MCF 10A (cell line): ENCODE measurements at regions of chr5 and their contacts with region 1.

Region 1: GRCh38 chr5:8908055-8908683 is 637.7 kb downstream of the SEMA5A start:
- DNase-seq: peak; percentile 62
- H3K4me3 Mint-ChIP-seq: no peak overlapping the region
- H3K27ac Mint-ChIP-seq: peak overlapping the region; percentile 94
- H3K4me1 Mint-ChIP-seq: peaks cover 37% of the 10 kb centered on the region
- H3K27me3 Mint-ChIP-seq: no peaks in the 10 kb centered on the region
- CTCF ChIP-seq: peak; percentile 65

Region 2: GRCh38 chr5:8756498-8757084 is 151.6 kb before region 1 on chr5:
- CTCF ChIA-PET with region 1: interaction called, 3 read pairs
- POLR2A ChIA-PET with region 1: interaction called, 3 read pairs
- intact Hi-C with region 1: loop called (anchors 1 kb)
- DNase-seq: peak; percentile 55
- H3K4me3 Mint-ChIP-seq: no peak overlapping the region
- H3K27ac Mint-ChIP-seq: no peak overlapping the region
- H3K4me1 Mint-ChIP-seq: no peaks in the 10 kb centered on the region
- H3K27me3 Mint-ChIP-seq: no peaks in the 10 kb centered on the region
- CTCF ChIP-seq: peak; percentile 64

Region 3: GRCh38 chr5:8848998-8849594 is 59.1 kb before region 1 on chr5:
- CTCF ChIA-PET with region 1: no interaction called
- POLR2A ChIA-PET with region 1: no interaction called
- intact Hi-C with region 1: loop called (anchors 5 kb)
- DNase-seq: peak; percentile 73
- H3K4me3 Mint-ChIP-seq: no peak overlapping the region
- H3K27ac Mint-ChIP-seq: no peak overlapping the region
- H3K4me1 Mint-ChIP-seq: peaks cover 2% of the 10 kb centered on the region
- H3K27me3 Mint-ChIP-seq: no peaks in the 10 kb centered on the region
- CTCF ChIP-seq: no peak

Region 4: DNA sequence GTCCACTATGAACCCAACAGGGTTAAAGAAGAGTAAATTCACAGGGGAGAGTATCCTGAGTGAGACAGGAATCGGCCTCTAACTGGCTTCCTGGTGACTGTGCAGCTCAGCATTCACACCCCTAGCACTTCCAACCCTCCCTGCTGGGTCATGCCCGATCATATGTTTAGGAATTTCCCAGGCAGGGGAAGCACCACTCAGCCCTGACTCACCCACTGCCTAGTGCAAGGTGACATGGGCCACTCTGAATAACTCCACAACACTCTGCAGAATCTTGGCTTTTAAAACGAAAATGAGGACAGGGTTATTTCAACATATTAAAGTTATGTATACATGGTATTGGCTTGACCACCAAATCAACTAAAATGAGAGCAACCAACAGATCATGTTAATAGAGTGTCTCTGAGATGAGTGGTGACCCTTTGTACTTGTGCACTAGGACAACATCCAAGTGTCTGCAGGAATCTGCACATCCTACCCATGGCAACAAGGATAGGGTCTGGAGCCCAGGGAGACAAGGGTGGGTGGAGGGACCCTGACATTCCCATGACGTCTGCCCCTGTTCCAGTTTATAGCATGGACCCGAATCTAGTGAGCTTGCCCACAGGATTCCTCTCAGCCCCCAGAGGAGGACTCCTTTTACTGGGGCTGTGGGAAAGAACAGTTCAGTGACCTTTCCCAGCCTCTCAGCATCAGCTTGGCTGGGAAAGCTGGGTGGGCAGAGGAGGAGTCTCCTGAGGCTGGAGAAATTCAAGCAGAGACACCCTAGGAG is 151.9 kb after region 1 on chr5:
- CTCF ChIA-PET with region 1: no interaction called
- POLR2A ChIA-PET with region 1: interaction called, 6 read pairs
- intact Hi-C with region 1: loop called (anchors 5 kb)
- DNase-seq: peak; percentile 92
- H3K4me3 Mint-ChIP-seq: no peak overlapping the region
- H3K27ac Mint-ChIP-seq: peak overlapping the region; percentile 28
- H3K4me1 Mint-ChIP-seq: peaks cover 6% of the 10 kb centered on the region
- H3K27me3 Mint-ChIP-seq: no peaks in the 10 kb centered on the region
- CTCF ChIP-seq: no peak

Region 5: GRCh38 chr5:9166202-9167112 is 258.3 kb after region 1 on chr5:
- CTCF ChIA-PET with region 1: no interaction called
- POLR2A ChIA-PET with region 1: interaction called, 11 read pairs
- intact Hi-C with region 1: no loop called
- DNase-seq: peak; percentile 9
- H3K4me3 Mint-ChIP-seq: no peak overlapping the region
- H3K27ac Mint-ChIP-seq: no peak overlapping the region
- H3K4me1 Mint-ChIP-seq: peaks cover 25% of the 10 kb centered on the region
- H3K27me3 Mint-ChIP-seq: no peaks in the 10 kb centered on the region
- CTCF ChIP-seq: no peak